ENCODE measurements at regions of chr10 and their contacts with region 1.

Region 1: DNA sequence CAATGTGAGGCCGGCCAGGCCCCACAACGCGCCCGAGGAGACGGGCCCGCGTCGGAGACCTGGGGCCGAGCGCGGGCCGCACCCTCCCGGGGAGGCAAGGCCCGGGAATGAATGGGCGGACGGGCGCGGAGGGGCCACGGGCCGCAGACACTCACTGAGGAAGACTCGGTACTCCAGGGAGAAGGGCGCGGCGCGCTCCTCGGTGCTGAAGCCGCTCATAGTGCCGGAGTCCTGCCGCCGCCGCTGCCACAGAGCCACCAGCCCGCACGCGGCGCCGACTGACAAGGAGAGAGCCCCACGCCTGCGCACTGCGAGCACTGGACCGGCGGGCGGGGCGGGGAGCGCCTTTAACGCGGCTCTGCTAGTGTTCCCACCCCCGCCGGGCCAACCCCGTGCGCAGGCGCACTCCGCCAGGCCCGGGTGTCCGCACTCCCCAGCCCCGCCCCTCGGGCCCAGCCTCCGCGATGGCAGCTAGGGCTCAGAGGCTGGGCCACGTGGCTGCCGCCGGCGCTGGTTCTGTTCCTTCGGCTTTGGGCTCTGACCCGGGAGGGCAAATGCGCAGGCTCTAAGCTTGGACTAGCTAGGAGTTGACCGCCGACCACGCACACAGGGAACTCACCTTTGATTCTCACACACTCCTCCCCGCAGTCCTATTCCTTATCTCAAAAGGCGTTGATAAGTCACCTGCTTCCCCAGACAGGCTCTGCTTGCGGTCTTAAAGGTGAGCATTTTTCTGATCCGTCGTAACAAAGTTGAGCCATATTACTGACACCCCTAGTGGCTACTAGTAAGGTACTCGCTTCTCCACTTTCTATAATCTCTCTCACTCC is at the start of gene PPA1:
- DNase-seq: peak; percentile 99
- H3K4me3 Mint-ChIP-seq: peak within 1 kb of the TSS; percentile 85
- H3K27ac Mint-ChIP-seq: peak within 1 kb of the TSS; percentile 97
- H3K4me1 Mint-ChIP-seq: peaks cover 30% of the 10 kb centered on the region
- H3K27me3 Mint-ChIP-seq: peaks cover 2% of the 10 kb centered on the region
- total RNA-seq, gene PPA1: 359 to 368 TPM

Region 2: GRCh38 chr10:70162892-70163201 is 70.5 kb before region 1 on chr10:
- CTCF ChIA-PET with region 1: no interaction called
- POLR2A ChIA-PET with region 1: no interaction called
- intact Hi-C with region 1: loop called (anchors 1 kb)
- DNase-seq: peak; percentile 82
- H3K4me3 Mint-ChIP-seq: peak overlapping the region; percentile 40
- H3K27ac Mint-ChIP-seq: peak overlapping the region; percentile 93
- H3K4me1 Mint-ChIP-seq: peaks cover 69% of the 10 kb centered on the region
- H3K27me3 Mint-ChIP-seq: no peaks in the 10 kb centered on the region

Region 3: GRCh38 chr10:70221030-70221429 is 12.3 kb before region 1 on chr10:
- CTCF ChIA-PET with region 1: interaction called, 54 read pairs
- POLR2A ChIA-PET with region 1: interaction called, 20 read pairs
- intact Hi-C with region 1: no loop called
- DNase-seq: no peak
- H3K4me3 Mint-ChIP-seq: no peak overlapping the region
- H3K27ac Mint-ChIP-seq: no peak overlapping the region
- H3K4me1 Mint-ChIP-seq: peaks cover 37% of the 10 kb centered on the region
- H3K27me3 Mint-ChIP-seq: no peaks in the 10 kb centered on the region

Region 4: DNA sequence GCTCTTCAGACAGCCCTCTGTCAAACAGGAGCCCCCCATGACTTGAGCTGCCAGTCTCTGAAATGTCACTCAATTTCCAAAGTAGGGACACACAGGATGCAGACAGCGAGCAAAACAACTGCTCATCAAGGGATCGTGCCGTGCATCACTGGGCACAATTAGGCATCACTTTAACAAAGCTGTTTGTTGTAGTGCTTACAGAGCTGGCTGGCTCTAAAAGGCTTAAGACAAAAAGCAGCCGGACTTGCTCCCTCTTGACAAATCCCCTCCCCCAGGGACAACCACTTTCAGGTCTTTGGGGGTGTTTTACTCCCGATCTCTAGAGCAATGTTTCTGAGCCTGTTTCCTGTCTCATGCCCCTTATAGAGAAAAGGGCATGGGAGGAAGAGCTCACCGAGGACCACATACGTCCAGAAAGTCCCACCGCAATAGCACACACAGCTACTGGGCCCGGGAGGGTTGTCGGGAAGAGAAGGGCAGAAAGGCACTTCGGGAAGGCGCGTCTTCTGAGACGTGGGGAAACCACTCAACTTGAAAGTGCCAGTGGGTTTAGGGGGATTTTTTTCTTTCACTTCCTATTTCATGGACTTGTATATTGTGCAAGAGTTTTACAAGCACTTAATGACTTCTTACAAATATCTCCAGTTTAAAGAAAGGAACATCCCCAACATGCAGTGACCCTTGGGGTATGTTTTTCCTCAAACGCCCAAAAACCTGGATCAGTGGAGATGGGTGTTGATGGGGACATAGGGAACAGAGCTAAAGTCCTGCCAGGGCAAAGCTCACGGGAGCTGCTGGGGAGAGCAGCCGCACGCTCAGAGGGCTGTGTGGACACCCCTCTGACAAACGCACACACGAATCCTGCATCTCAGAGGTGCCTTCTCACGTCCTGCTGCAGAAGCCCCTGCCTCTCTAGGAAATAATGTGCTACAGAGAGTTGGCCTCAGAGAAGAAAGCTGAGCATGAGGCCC is 122.0 kb after region 1 on chr10:
- CTCF ChIA-PET with region 1: interaction called, 3 read pairs
- POLR2A ChIA-PET with region 1: interaction called, 12 read pairs
- intact Hi-C with region 1: no loop called
- DNase-seq: peak; percentile 48
- H3K4me3 Mint-ChIP-seq: peak overlapping the region; percentile 57
- H3K27ac Mint-ChIP-seq: peak overlapping the region; percentile 62
- H3K4me1 Mint-ChIP-seq: peaks cover 28% of the 10 kb centered on the region
- H3K27me3 Mint-ChIP-seq: no peaks in the 10 kb centered on the region

Region 5: GRCh38 chr10:70404036-70404786 is 170.9 kb after region 1 on chr10 and contains the start of gene EIF4EBP2:
- CTCF ChIA-PET with region 1: no interaction called
- POLR2A ChIA-PET with region 1: interaction called, 10 read pairs
- intact Hi-C with region 1: no loop called
- DNase-seq: peak; percentile 100
- H3K4me3 Mint-ChIP-seq: peak within 1 kb of the TSS; percentile 95
- H3K27ac Mint-ChIP-seq: peak within 1 kb of the TSS; percentile 91
- H3K4me1 Mint-ChIP-seq: peaks cover 37% of the 10 kb centered on the region
- H3K27me3 Mint-ChIP-seq: no peaks in the 10 kb centered on the region
- total RNA-seq, gene EIF4EBP2: 27.1 to 27.5 TPM